Activated CD4-positive, alpha-beta memory T cell treated with anti-CD3 and anti-CD28 coated beads for 36 hours (primary cell): ENCODE measurements at regions of chr11 and their contacts with region 1.

Region 1: DNA sequence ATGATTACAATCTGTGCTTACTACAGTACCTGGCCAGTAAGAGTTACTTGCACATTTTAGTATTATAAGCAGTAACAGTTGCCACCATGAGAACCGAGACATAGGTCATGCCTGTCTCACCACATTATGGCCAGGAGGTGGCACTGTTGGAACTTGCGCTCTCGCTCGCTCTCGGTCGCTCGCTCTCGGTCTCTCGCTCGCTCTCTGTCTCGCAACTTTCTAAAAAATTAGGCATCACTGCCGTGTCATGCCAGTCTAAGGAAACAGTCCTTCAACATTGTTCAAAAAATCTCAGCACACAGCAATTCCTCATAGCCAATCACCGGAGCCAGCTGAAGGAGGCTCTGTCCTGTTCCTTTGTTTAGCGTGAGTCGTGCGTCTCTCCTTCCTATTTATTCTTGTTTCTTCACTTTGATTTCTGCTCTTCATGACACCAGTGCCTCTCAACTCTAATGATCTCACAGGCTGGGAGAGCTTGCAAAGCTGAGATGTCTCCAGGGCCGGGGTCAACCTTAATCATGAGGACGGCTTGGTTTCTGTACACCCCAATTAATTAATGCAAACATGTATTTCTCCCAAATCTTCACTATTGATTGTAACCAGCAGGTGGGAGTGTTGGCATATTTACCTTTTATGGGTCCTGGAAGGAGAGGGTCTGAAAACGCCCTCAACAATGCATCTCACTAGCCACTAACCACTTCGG is 6.3 kb upstream of the ADAMTS8 start:
- DNase-seq: peak; percentile 78
- H3K4me3 Mint-ChIP-seq: no peak overlapping the region
- H3K27ac Mint-ChIP-seq: no peak overlapping the region
- H3K4me1 Mint-ChIP-seq: peaks cover 9% of the 10 kb centered on the region
- H3K27me3 Mint-ChIP-seq: peaks cover 10% of the 10 kb centered on the region

Region 2: DNA sequence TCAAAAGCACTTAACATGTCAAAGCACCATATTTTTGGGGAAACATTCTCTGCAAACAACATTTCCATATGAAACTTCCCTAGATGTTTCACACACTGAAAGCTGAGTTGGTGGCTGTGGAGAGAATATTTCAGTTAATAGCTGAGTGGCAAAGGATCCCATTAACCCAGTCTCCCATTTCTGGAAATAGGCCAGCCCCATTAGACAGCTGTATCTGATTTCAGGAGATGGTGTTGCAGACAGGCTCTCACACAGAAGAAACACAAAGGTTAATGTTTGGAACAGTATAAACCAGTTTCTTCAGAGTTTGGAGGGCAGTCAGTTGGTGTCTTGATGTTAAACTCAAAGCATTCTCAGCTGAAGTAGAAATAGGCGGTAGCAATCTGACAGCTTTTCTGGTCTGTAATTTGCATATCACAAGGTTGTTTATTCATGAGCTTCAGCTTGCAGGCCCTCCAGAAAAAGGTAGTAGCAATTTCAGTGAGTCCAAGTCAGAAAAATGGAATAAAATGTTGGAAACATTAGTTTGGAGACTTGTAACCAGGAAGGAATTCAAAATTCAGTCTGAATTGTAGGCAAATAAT is 104.5 kb before region 1 on chr11:
- CTCF ChIA-PET with region 1: no interaction called
- POLR2A ChIA-PET with region 1: no interaction called
- intact Hi-C with region 1: no loop called
- DNase-seq: no peak
- H3K4me3 Mint-ChIP-seq: no peak overlapping the region
- H3K27ac Mint-ChIP-seq: no peak overlapping the region
- H3K4me1 Mint-ChIP-seq: no peaks in the 10 kb centered on the region
- H3K27me3 Mint-ChIP-seq: no peaks in the 10 kb centered on the region

Region 3: GRCh38 chr11:130636722-130637517 is 202.2 kb after region 1 on chr11:
- CTCF ChIA-PET with region 1: interaction called, 3 read pairs
- POLR2A ChIA-PET with region 1: no interaction called
- intact Hi-C with region 1: loop called (anchors 10 kb)
- DNase-seq: no peak
- H3K4me3 Mint-ChIP-seq: no peak overlapping the region
- H3K27ac Mint-ChIP-seq: no peak overlapping the region
- H3K4me1 Mint-ChIP-seq: no peaks in the 10 kb centered on the region
- H3K27me3 Mint-ChIP-seq: peaks cover 1% of the 10 kb centered on the region

Region 4: DNA sequence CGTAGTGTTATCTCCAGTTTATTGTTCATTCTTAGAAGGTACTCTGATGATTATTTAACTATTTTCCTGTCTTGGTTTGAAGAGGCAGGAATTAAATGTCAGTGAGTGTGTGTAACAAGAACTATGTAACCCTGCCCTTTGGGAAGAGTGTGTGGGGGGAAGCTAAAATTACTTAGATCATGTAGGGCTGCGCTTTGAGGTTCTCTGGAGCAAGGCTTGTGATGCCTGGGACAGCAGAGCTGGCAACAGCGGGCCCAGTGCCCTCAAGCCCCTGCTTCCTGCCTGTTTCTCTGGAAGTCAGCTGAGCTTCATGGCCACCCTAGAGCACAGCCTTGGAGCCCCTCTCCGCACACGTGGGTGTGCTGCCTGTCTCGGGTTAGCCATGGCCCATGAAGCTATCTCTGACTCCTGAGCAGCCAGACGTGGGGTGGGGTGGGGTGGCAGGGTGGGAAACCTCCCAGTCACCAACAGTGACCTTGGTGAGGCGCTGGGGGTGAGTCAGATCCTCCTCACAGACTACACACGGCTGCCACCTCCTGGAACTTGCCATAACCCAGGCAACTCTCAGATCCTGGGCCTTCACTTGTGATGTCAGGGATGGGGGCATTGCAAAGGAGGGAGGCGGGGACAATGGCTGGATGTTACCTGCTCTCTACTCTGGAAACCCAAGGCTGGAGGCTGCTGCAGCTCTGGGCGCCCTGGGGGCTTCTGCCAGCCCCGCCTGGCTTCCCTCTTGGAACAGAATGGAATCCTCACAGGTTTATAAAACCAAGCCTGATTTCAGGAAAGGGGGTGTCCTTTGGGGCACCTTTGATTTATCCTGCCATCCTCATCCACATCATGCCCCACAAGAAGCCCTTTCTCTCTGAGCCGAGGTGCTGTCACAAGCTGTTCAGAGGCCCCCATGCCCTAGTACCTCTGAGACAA is 393.0 kb after region 1 on chr11:
- CTCF ChIA-PET with region 1: interaction called, 7 read pairs
- POLR2A ChIA-PET with region 1: no interaction called
- intact Hi-C with region 1: loop called (anchors 1 kb)
- DNase-seq: peak; percentile 47
- H3K4me3 Mint-ChIP-seq: no peak overlapping the region
- H3K27ac Mint-ChIP-seq: no peak overlapping the region
- H3K4me1 Mint-ChIP-seq: peaks cover 3% of the 10 kb centered on the region
- H3K27me3 Mint-ChIP-seq: peaks cover 3% of the 10 kb centered on the region

Region 5: GRCh38 chr11:130871616-130872015 is 436.9 kb after region 1 on chr11:
- CTCF ChIA-PET with region 1: interaction called, 13 read pairs
- POLR2A ChIA-PET with region 1: no interaction called
- intact Hi-C with region 1: no loop called
- DNase-seq: no peak
- H3K4me3 Mint-ChIP-seq: no peak overlapping the region
- H3K27ac Mint-ChIP-seq: no peak overlapping the region
- H3K4me1 Mint-ChIP-seq: peaks cover 9% of the 10 kb centered on the region
- H3K27me3 Mint-ChIP-seq: no peaks in the 10 kb centered on the region